ENCODE measurements at regions of chr6 and their contacts with region 1.

Region 1: DNA sequence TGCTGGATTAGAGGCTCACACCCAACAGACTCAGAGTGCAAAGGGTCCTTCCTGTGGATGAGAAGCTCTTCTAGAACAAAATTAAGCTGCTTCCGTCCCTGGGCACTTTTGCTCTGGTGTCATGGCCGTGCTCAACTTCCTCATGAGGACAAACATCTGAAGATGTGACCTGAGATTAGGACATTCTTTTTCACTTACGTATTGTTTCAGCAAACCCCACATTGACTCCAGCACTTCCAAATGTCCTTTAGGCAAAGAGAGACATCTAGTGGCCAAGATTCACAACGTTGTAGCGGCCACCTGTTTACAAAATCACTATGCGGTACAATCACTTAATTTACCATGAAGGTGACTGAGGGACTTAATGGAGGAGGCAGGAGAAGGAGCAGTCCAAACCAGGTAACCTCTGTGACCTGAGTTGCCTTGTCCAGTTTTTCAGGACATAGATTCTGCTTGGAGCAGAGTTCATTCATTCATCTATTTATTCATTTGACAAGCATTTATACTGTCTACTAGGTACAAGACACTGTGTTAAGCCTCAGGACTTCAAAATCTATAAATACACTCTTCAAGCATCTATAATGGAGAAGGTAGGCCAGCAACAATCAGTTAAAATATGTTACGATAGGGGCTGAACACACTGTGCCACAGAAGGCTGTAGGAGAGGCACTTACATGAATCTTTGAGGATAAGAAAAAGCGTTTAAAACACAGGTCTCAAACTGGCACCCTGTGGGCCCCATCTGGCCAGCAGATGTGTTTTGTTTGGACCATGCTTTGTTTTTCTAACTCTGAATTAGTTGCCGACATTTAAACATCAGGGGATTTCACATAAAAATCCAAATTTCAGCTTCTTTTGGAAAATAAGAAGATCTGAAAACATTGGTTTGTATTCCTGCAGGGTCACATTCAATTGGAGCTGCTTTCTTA is 5.6 kb upstream of the ADGRF1 start:
- DNase-seq: peak; percentile 89
- ATAC-seq: peak; percentile 80
- H3K4me3 ChIP-seq: peak overlapping the region in 1 of 2 experiments; percentile 9; a peak in 1 of 4 replicates
- H3K27ac ChIP-seq: no peak overlapping the region
- H3K4me1 ChIP-seq: peaks cover 29 to 59% of the 10 kb centered on the region in 2 experiments
- H3K27me3 ChIP-seq: no peaks in the 10 kb centered on the region
- CTCF ChIP-seq: peak; percentile 77 to 88 (median 84); a peak in 5 of 6 replicates
- POLR2A ChIP-seq: no peak
- RAD21 ChIP-seq: peak; percentile 95

Region 2: DNA sequence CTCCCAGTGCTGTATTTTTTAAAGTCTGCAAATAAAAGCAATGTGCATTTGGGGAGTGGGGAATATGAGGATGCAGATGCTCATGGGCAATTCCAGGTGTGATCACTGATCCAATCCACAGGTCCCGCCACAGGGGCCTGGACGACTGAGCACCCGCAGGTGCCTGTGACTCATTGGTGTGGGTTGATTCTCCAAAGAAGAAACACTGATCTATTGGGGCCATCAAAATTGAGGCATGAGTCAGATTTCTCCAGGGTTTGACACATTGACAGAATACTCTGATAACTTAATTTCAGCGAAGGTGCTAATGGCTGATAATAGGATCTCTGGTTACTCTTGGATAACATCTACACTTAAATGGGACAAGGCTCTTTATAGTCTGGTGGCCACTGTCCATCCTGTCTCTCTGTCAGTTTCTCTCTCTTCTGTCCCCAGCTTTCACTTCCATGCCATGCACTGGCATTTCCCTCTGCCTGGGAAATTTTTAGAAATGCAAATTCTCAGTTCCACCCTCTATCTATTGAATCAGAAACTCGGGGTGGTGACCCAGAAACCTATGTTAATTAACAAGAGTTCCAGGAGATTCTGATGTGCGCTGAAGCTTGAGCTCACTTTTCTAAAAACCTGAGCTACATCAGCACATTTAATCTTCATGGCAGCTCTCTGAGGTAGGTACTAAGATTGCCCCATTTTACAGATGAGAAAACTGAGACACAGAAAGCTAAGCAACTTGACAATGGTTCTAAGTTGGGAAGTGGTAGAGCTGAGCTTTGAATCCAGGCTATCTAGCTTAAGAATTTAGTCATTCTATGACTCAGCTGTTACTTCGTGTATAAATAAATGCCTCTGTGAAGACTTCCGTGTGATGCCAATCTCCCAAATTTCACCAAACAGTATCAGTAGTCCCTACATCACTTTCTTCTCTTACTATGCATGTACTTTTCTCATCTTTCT is 546.3 kb before region 1 on chr6:
- CTCF ChIA-PET with region 1: no interaction called
- POLR2A ChIA-PET with region 1: no interaction called
- RAD21 ChIA-PET with region 1: no interaction called
- intact Hi-C with region 1: no loop called
- DNase-seq: no peak
- ATAC-seq: no peak
- H3K4me3 ChIP-seq: no peak overlapping the region
- H3K27ac ChIP-seq: no peak overlapping the region
- H3K4me1 ChIP-seq: no peaks in the 10 kb centered on the region
- H3K27me3 ChIP-seq: no peaks in the 10 kb centered on the region
- CTCF ChIP-seq: no peak
- POLR2A ChIP-seq: no peak
- RAD21 ChIP-seq: no peak

Region 3: GRCh38 chr6:46652603-46653438 is 394.9 kb before region 1 on chr6 and contains the starts of genes CYP39A1 and SLC25A27:
- CTCF ChIA-PET with region 1: no interaction called
- POLR2A ChIA-PET with region 1: no interaction called
- RAD21 ChIA-PET with region 1: no interaction called
- intact Hi-C with region 1: loop called (anchors 5 kb)
- DNase-seq: peak; percentile 74
- ATAC-seq: peak; percentile 98
- H3K4me3 ChIP-seq: peak within 1 kb of the TSS; percentile 71 to 73
- H3K27ac ChIP-seq: peak within 1 kb of the TSS; percentile 52; the same call in 1 of the 2 replicates
- H3K4me1 ChIP-seq: peaks cover 3 to 28% of the 10 kb centered on the region in 2 experiments; a peak in 2 of 4 replicates
- H3K27me3 ChIP-seq: no peaks in the 10 kb centered on the region
- CTCF ChIP-seq: no peak
- POLR2A ChIP-seq: peak; percentile 39
- RAD21 ChIP-seq: no peak
- total RNA-seq, gene CYP39A1: 0.54 TPM
- total RNA-seq, gene SLC25A27: 10.7 TPM

Region 4: DNA sequence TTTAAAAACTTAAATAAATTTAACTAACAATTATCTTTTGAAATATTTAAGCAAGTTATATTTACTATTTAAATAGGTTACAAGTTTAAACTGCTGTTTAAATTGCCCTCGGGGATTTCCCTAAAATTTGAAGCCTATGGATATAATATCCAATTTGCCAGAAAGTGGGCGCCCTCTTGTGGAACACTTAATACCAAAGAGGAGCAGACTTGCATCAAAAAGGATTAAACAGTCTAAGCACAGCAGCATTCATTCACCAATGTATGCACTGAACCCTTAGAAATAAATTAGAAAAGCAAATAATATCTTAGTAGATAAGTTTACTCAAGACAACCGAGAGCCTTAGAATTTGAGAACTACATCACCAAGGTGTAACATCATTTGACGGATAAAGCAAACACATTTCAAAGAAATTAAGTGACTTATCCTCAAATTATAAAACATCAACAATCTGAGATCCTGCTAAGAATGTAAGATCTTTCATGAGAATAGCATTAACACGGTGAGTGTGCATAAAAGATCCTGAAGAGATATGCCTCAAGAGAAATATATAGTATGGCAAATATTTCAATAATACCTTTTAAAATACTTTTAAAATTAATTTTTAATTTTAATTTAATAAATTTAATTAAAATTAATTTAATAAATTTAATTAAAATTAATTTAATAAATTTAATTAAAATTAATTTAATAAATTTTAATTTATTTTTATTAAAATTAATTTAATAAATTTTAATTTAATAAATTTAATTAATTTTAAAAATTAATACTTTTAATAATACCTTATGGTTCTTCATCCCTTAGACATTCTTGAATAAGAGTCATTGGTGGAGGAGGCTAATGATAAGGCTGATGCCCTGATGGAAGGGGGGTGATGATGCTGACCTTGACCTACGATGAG is 266.0 kb before region 1 on chr6:
- CTCF ChIA-PET with region 1: no interaction called
- POLR2A ChIA-PET with region 1: no interaction called
- RAD21 ChIA-PET with region 1: no interaction called
- intact Hi-C with region 1: loop called (anchors 5 kb)
- DNase-seq: peak; percentile 58
- ATAC-seq: peak; percentile 83
- H3K4me3 ChIP-seq: no peak overlapping the region
- H3K27ac ChIP-seq: no peak overlapping the region
- H3K4me1 ChIP-seq: no peaks in the 10 kb centered on the region
- H3K27me3 ChIP-seq: no peaks in the 10 kb centered on the region
- CTCF ChIP-seq: peak; percentile 66 to 76 (median 75)
- POLR2A ChIP-seq: no peak
- RAD21 ChIP-seq: peak; percentile 81

Region 5: GRCh38 chr6:46993846-46994245 is 53.9 kb before region 1 on chr6:
- CTCF ChIA-PET with region 1: interaction called, 5 read pairs
- POLR2A ChIA-PET with region 1: interaction called, 9 read pairs
- RAD21 ChIA-PET with region 1: interaction called, 4 to 5 read pairs
- intact Hi-C with region 1: loop called (anchors 1 kb)
- DNase-seq: peak; percentile 90
- ATAC-seq: peak; percentile 93
- H3K4me3 ChIP-seq: peak overlapping the region in 1 of 2 experiments; percentile 8; a peak in 1 of 4 replicates
- H3K27ac ChIP-seq: peak overlapping the region; percentile 42; the same call in 1 of the 2 replicates
- H3K4me1 ChIP-seq: peaks cover 15 to 70% of the 10 kb centered on the region in 2 experiments
- H3K27me3 ChIP-seq: no peaks in the 10 kb centered on the region
- CTCF ChIP-seq: no peak
- POLR2A ChIP-seq: no peak
- RAD21 ChIP-seq: 0 out of 2 replicates have a peak, but pooled peaks have one; percentile 28

Region 6: DNA sequence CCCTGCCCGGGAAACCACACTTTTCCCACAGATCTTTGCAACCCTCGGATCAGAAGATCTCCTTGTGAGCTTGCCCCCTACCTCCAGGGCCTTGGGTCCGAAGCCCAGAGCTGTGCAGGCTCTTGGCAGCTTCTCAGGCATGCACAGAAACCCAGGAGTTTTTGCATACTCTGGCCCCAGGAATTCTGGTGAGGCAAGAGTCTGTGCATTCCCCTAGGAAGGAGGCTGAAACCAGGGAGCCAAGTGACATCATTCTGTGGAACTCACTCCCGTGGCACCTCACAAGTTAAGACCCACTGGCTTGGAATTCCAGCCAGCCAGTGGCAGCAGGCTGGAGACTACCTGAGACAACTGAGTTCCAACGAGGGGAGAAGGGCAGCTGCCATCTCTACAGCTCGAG is 161.9 kb after region 1 on chr6:
- CTCF ChIA-PET with region 1: no interaction called
- POLR2A ChIA-PET with region 1: no interaction called
- RAD21 ChIA-PET with region 1: no interaction called
- intact Hi-C with region 1: no loop called
- DNase-seq: no peak
- ATAC-seq: no peak
- H3K4me3 ChIP-seq: no peak overlapping the region
- H3K27ac ChIP-seq: no peak overlapping the region
- H3K4me1 ChIP-seq: no peaks in the 10 kb centered on the region
- H3K27me3 ChIP-seq: no peaks in the 10 kb centered on the region
- CTCF ChIP-seq: no peak
- POLR2A ChIP-seq: no peak
- RAD21 ChIP-seq: no peak

Region 7: GRCh38 chr6:47309291-47310130 is 261.8 kb after region 1 on chr6 and contains the start of gene TNFRSF21:
- CTCF ChIA-PET with region 1: no interaction called
- POLR2A ChIA-PET with region 1: no interaction called
- RAD21 ChIA-PET with region 1: no interaction called
- intact Hi-C with region 1: loop called (anchors 2 kb)
- DNase-seq: peak; percentile 89
- ATAC-seq: peak; percentile 94
- H3K4me3 ChIP-seq: peak within 1 kb of the TSS; percentile 73 to 80
- H3K27ac ChIP-seq: peak within 1 kb of the TSS; percentile 70
- H3K4me1 ChIP-seq: peaks cover 6 to 13% of the 10 kb centered on the region in 2 experiments
- H3K27me3 ChIP-seq: no peaks in the 10 kb centered on the region
- CTCF ChIP-seq: peak; percentile 85 to 88 (median 87)
- POLR2A ChIP-seq: peak; percentile 72
- RAD21 ChIP-seq: peak; percentile 97
- total RNA-seq, gene TNFRSF21: 48.3 TPM

Region 8: DNA sequence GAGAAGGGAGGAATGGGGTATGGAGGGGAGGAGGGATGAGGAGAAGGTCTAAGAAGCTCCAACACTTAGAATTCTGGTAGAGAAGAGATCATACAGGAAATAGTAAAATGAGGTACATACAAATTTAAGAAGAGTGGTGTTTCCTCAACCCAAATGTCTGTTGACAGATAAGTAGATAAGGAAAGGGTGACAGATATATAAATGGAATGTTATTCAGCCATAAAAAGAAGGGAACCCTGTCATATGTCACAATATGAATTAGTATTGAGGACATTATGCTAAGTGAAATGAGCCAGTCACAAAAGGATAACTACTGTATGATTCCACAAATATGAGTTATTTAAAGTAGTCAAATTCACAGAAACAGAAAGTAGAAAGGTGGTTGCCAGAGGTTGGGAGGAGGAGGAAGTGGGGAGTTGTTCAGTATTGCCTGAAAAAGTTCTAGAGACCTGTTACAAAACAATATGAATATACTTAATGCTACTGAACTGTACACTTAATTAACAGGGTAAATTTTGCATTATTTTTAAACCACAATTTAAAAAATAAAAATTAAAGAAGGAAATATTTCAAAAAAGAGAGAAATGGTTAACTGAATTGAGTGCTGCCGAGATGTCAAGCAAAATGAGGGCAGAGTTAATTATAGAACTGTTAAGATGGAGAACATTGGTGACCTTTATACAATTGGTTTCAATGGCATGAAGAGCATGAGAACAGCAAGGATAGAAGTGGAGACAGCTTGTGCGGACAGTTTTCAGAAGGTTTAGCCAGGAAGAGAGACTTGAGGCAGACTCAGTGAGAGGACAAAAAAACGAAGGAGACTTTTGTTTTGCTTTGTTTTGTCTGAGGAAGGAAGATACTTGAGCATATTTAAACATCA is 603.0 kb after region 1 on chr6:
- CTCF ChIA-PET with region 1: no interaction called
- POLR2A ChIA-PET with region 1: no interaction called
- RAD21 ChIA-PET with region 1: no interaction called
- intact Hi-C with region 1: no loop called
- DNase-seq: no peak
- ATAC-seq: no peak
- H3K4me3 ChIP-seq: no peak overlapping the region
- H3K27ac ChIP-seq: no peak overlapping the region
- H3K4me1 ChIP-seq: peaks cover 0 to 21% of the 10 kb centered on the region in 2 experiments; a peak in 2 of 4 replicates
- H3K27me3 ChIP-seq: no peaks in the 10 kb centered on the region
- CTCF ChIP-seq: no peak
- POLR2A ChIP-seq: no peak
- RAD21 ChIP-seq: no peak

Region 9: DNA sequence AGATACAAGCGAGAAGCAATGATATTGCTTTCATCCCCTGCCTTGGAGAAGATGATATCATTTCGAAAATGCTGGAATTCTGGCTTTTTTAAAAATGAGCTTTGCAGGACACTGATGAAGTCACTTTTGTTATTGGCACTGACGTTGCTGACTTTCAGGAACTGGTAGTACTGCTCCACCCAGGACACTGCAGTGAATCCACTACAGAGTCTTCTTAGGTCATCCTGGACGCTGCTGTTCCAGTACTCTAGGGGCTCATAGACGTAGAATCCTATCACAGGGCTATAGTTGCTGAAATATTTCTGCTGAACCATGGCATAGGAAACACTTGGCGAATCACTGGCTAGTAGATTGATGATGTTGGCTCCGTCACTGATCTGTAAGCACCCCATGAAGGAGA is 831.3 kb after region 1 on chr6:
- CTCF ChIA-PET with region 1: no interaction called
- POLR2A ChIA-PET with region 1: no interaction called
- RAD21 ChIA-PET with region 1: no interaction called
- intact Hi-C with region 1: no loop called
- DNase-seq: no peak
- ATAC-seq: no peak
- H3K4me3 ChIP-seq: no peak overlapping the region
- H3K27ac ChIP-seq: no peak overlapping the region
- H3K4me1 ChIP-seq: no peaks in the 10 kb centered on the region
- H3K27me3 ChIP-seq: no peaks in the 10 kb centered on the region
- CTCF ChIP-seq: no peak
- POLR2A ChIP-seq: no peak
- RAD21 ChIP-seq: no peak